ENCODE measurements at regions of chr12 and their contacts with region 1.

Region 1: GRCh38 chr12:112012775-112013600 is at the starts of genes ERP29 and TMEM116:
- DNase-seq: peak; percentile 100
- ATAC-seq: peak; percentile 81
- H3K4me3 ChIP-seq: peak within 1 kb of the TSS; percentile 98
- H3K4me3 Mint-ChIP-seq: peak within 1 kb of the TSS; percentile 97
- H3K27ac ChIP-seq: peak within 1 kb of the TSS; percentile 92 to 96
- H3K27ac Mint-ChIP-seq: peak within 1 kb of the TSS; percentile 100
- H3K4me1 ChIP-seq: peaks cover 58% of the 10 kb centered on the region
- H3K4me1 Mint-ChIP-seq: peaks cover 66% of the 10 kb centered on the region
- H3K27me3 ChIP-seq: no peaks in the 10 kb centered on the region
- H3K27me3 Mint-ChIP-seq: no peaks in the 10 kb centered on the region
- CTCF ChIP-seq: peak; percentile 66
- total RNA-seq, gene ERP29: 109 to 117 TPM
- total RNA-seq, gene TMEM116: 12.7 to 12.8 TPM

Region 2: GRCh38 chr12:111405149-111405860 is 607.7 kb before region 1 on chr12:
- CTCF ChIA-PET with region 1: no interaction called
- POLR2A ChIA-PET with region 1: no interaction called
- intact Hi-C with region 1: loop called in 1 of 2 experiments (anchors 10 kb)
- DNase-seq: peak; percentile 96 to 100 (median 99)
- ATAC-seq: peak; percentile 78
- H3K4me3 ChIP-seq: peak overlapping the region; percentile 63
- H3K4me3 Mint-ChIP-seq: peak overlapping the region; percentile 89
- H3K27ac ChIP-seq: peak overlapping the region; percentile 75 to 98
- H3K27ac Mint-ChIP-seq: peak overlapping the region; percentile 72
- H3K4me1 ChIP-seq: peaks cover 68% of the 10 kb centered on the region
- H3K4me1 Mint-ChIP-seq: peaks cover 62% of the 10 kb centered on the region
- H3K27me3 ChIP-seq: no peaks in the 10 kb centered on the region
- H3K27me3 Mint-ChIP-seq: no peaks in the 10 kb centered on the region
- CTCF ChIP-seq: peak; percentile 74

Region 3: DNA sequence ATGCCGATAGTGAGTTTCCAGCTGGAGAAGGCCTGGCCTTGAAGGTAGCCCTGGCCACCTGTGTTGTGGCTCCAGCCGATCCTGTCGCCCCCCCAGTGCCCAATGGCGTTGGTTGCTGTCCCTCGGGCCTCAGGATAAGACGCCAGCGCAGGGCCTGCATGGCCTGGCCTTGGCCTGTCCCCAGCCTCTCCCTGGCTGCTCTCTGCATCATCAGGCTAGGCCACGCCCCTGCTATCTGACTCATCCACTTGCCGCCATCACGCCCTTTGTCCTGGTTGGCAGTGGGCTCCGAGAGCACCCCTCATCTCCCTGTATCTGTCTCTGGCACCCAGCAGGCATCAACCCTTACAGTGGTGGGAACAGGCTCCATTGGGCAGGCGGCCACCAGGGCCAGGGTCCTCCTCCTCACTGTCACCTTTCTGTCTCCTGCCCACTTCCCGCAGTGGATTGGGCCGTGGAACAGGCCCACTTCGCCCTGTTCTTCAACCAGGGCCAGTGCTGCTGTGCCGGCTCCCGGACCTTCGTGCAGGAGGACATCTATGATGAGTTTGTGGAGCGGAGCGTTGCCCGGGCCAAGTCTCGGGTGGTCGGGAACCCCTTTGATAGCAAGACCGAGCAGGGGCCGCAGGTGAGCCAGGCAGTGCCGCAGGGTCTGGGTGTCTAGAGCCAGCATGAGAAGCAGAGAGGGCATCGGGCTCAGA is 220.7 kb before region 1 on chr12:
- CTCF ChIA-PET with region 1: no interaction called
- POLR2A ChIA-PET with region 1: no interaction called
- intact Hi-C with region 1: no loop called
- DNase-seq: no peak
- ATAC-seq: no peak
- H3K4me3 ChIP-seq: no peak overlapping the region
- H3K4me3 Mint-ChIP-seq: no peak overlapping the region
- H3K27ac ChIP-seq: no peak overlapping the region
- H3K27ac Mint-ChIP-seq: no peak overlapping the region
- H3K4me1 ChIP-seq: no peaks in the 10 kb centered on the region
- H3K4me1 Mint-ChIP-seq: no peaks in the 10 kb centered on the region
- H3K27me3 ChIP-seq: no peaks in the 10 kb centered on the region
- H3K27me3 Mint-ChIP-seq: no peaks in the 10 kb centered on the region
- CTCF ChIP-seq: no peak

Region 4: GRCh38 chr12:111841750-111842555 is 171.0 kb before region 1 on chr12 and contains the start of gene MAPKAPK5:
- CTCF ChIA-PET with region 1: no interaction called
- POLR2A ChIA-PET with region 1: interaction called, 21 read pairs
- intact Hi-C with region 1: loop called (anchors 2 to 5 kb)
- DNase-seq: peak; percentile 93 to 99 (median 97)
- ATAC-seq: peak; percentile 83
- H3K4me3 ChIP-seq: peak within 1 kb of the TSS; percentile 100
- H3K4me3 Mint-ChIP-seq: peak within 1 kb of the TSS; percentile 99
- H3K27ac ChIP-seq: peak within 1 kb of the TSS; percentile 81 to 84
- H3K27ac Mint-ChIP-seq: peak within 1 kb of the TSS; percentile 98
- H3K4me1 ChIP-seq: peaks cover 43% of the 10 kb centered on the region
- H3K4me1 Mint-ChIP-seq: peaks cover 67% of the 10 kb centered on the region
- H3K27me3 ChIP-seq: no peaks in the 10 kb centered on the region
- H3K27me3 Mint-ChIP-seq: no peaks in the 10 kb centered on the region
- CTCF ChIP-seq: no peak
- total RNA-seq, gene MAPKAPK5: 62.2 to 63.6 TPM

Region 5: GRCh38 chr12:111953455-111953854 is 59.5 kb before region 1 on chr12:
- CTCF ChIA-PET with region 1: interaction called, 7 read pairs
- POLR2A ChIA-PET with region 1: interaction called, 27 read pairs
- intact Hi-C with region 1: no loop called
- DNase-seq: no peak
- ATAC-seq: no peak
- H3K4me3 ChIP-seq: no peak overlapping the region
- H3K4me3 Mint-ChIP-seq: no peak overlapping the region
- H3K27ac ChIP-seq: no peak overlapping the region
- H3K27ac Mint-ChIP-seq: no peak overlapping the region
- H3K4me1 ChIP-seq: no peaks in the 10 kb centered on the region
- H3K4me1 Mint-ChIP-seq: peaks cover 40% of the 10 kb centered on the region
- H3K27me3 ChIP-seq: no peaks in the 10 kb centered on the region
- H3K27me3 Mint-ChIP-seq: no peaks in the 10 kb centered on the region
- CTCF ChIP-seq: no peak

Region 6: DNA sequence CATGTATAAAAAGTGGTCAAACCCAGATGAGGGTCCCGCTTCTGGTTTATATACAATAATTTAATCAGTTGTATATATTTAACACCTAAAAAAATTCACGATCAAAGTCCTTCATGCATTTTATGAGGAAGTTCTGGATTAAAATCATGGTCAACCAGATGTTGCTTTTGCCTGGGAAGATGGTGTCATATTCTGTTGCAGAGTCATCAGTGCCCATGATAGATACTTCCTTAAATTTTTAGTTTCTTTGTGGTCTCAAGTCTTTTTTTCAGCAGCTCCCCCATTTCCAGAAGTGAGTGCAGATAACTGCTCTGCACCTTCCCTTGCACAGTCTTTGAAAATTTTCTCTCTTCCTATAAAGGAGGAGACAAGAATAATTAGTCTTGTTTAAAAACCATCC is 16.3 kb after region 1 on chr12:
- CTCF ChIA-PET with region 1: interaction called, 5 read pairs
- POLR2A ChIA-PET with region 1: interaction called, 11 read pairs
- intact Hi-C with region 1: no loop called
- DNase-seq: no peak
- ATAC-seq: no peak
- H3K4me3 ChIP-seq: no peak overlapping the region
- H3K4me3 Mint-ChIP-seq: no peak overlapping the region
- H3K27ac ChIP-seq: no peak overlapping the region
- H3K27ac Mint-ChIP-seq: peak overlapping the region; percentile 65
- H3K4me1 ChIP-seq: peaks cover 5% of the 10 kb centered on the region
- H3K4me1 Mint-ChIP-seq: peaks cover 33% of the 10 kb centered on the region
- H3K27me3 ChIP-seq: no peaks in the 10 kb centered on the region
- H3K27me3 Mint-ChIP-seq: no peaks in the 10 kb centered on the region
- CTCF ChIP-seq: no peak

Region 7: GRCh38 chr12:112125250-112125999 is 112.4 kb after region 1 on chr12 and contains the start of gene TRAFD1:
- CTCF ChIA-PET with region 1: interaction called, 3 read pairs
- POLR2A ChIA-PET with region 1: interaction called, 14 read pairs
- intact Hi-C with region 1: loop called in 1 of 2 experiments (anchors 1 kb)
- DNase-seq: peak; percentile 96 to 99 (median 98)
- ATAC-seq: peak; percentile 98
- H3K4me3 ChIP-seq: peak within 1 kb of the TSS; percentile 73
- H3K4me3 Mint-ChIP-seq: peak within 1 kb of the TSS; percentile 87
- H3K27ac ChIP-seq: peak within 1 kb of the TSS; percentile 68
- H3K27ac Mint-ChIP-seq: peak within 1 kb of the TSS; percentile 76
- H3K4me1 ChIP-seq: peaks cover 45% of the 10 kb centered on the region
- H3K4me1 Mint-ChIP-seq: peaks cover 43% of the 10 kb centered on the region
- H3K27me3 ChIP-seq: no peaks in the 10 kb centered on the region
- H3K27me3 Mint-ChIP-seq: no peaks in the 10 kb centered on the region
- CTCF ChIP-seq: no peak
- total RNA-seq, gene TRAFD1: 19.6 to 20.4 TPM

Region 8: GRCh38 chr12:112382232-112382796 is 369.3 kb after region 1 on chr12 and contains the start of gene HECTD4:
- CTCF ChIA-PET with region 1: no interaction called
- POLR2A ChIA-PET with region 1: no interaction called
- intact Hi-C with region 1: loop called in 1 of 2 experiments (anchors 5 kb)
- DNase-seq: peak; percentile 81 to 97 (median 92)
- ATAC-seq: peak; percentile 98
- H3K4me3 ChIP-seq: peak within 1 kb of the TSS; percentile 81
- H3K4me3 Mint-ChIP-seq: peak within 1 kb of the TSS; percentile 99
- H3K27ac ChIP-seq: peak within 1 kb of the TSS; percentile 44 to 62
- H3K27ac Mint-ChIP-seq: peak within 1 kb of the TSS; percentile 85
- H3K4me1 ChIP-seq: peaks cover 19% of the 10 kb centered on the region
- H3K4me1 Mint-ChIP-seq: peaks cover 27% of the 10 kb centered on the region
- H3K27me3 ChIP-seq: no peaks in the 10 kb centered on the region
- H3K27me3 Mint-ChIP-seq: no peaks in the 10 kb centered on the region
- CTCF ChIP-seq: no peak
- total RNA-seq, gene HECTD4: 40.2 to 43.3 TPM

Region 9: DNA sequence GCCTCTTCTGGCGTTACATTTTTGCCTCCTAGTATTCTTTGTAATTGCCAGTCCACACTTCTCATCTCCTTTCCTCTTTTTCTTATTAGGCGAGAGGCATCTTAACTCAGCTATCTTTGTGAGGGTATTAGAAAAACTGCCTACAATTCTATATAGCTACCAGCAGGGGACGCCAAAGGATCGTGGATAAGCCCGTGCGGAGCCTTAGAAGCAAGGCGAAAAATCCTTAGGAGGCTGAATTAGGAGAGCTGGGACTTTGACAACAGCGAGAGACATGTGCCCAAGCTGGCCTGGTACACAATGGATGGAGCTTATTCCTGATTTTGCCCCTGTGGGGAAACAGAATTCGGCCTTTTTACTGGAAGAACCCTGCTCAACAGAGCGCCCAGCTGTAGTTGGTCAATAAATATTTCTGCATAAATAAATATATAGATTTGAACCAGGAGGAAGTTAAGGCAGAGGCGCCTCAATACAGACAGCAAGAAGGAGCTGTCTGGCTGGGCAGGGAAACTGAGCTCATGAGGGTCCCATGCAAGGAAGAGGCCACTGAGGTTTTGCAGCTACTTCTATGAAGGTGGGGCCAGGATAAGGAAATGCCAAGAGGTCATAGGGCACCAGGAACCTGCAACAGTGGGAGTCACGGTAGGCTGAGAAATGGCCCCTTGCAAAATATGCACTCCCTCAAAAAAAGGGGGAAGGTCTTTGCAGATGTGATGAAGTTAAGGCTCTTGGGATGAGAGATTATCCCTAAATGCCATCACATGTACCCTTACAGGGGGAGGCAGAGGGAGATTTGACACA is 1967.7 kb after region 1 on chr12:
- CTCF ChIA-PET with region 1: no interaction called
- POLR2A ChIA-PET with region 1: no interaction called
- intact Hi-C with region 1: no loop called
- DNase-seq: peak in 4 of 14 experiments; percentile 30 to 72 (median 56)
- ATAC-seq: no peak
- H3K4me3 ChIP-seq: no peak overlapping the region
- H3K4me3 Mint-ChIP-seq: no peak overlapping the region
- H3K27ac ChIP-seq: no peak overlapping the region
- H3K27ac Mint-ChIP-seq: no peak overlapping the region
- H3K4me1 ChIP-seq: peaks cover 3% of the 10 kb centered on the region
- H3K4me1 Mint-ChIP-seq: no peaks in the 10 kb centered on the region
- H3K27me3 ChIP-seq: peaks cover 13% of the 10 kb centered on the region in 2 experiments
- H3K27me3 Mint-ChIP-seq: peaks cover 52% of the 10 kb centered on the region
- CTCF ChIP-seq: peak; percentile 67